ENCODE measurements at regions of chr2 and their contacts with region 1.

Region 1: GRCh38 chr2:31534636-31535035 is 46.1 kb downstream of the SRD5A2 start:
- DNase-seq: no peak
- H3K4me3 ChIP-seq: no peak overlapping the region
- CTCF ChIP-seq: no peak

Region 2: DNA sequence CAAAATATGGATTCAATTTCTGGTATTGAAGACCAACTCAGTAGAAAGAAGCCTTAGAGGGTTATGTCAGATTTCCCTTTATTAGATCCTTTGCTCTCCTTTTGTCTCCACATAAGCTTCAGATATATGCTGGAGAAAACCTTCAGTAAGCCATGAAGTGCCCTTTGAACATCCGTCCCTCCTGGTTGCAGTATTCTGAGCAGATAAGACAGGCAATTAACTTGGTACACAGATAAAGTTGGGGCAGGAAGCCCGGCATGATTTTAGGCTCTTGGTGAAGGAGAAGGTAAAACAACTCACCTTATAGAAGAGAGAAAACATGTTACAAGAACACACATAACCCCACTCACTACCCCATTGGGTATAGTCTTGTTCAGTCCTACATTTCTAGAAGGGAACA is 30.3 kb before region 1 on chr2:
- in situ Hi-C with region 1: loop called (anchors 5 kb)
- DNase-seq: no peak
- H3K4me3 ChIP-seq: no peak overlapping the region
- CTCF ChIP-seq: no peak

Region 3: DNA sequence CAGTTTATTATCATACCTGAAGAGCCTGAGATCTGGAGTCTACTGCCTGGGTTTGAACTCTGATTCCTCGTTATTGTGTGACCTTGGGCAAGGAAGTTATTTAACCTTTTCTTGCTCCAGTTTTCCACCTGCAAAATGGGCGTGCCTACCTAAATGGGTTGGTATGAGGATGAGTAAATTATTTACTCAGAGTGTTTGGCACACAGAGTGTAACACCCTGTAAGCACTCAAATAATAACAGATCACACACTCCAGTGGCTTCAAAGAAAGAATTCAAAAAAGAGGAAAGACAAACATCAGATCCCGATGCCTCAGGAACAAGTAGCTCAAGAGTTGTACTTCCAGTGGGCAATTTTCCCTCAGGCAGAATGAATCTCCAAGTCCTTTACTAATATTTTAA is 43.7 kb after region 1 on chr2:
- in situ Hi-C with region 1: loop called (anchors 5 kb)
- DNase-seq: no peak
- H3K4me3 ChIP-seq: no peak overlapping the region
- CTCF ChIP-seq: no peak

Region 4: DNA sequence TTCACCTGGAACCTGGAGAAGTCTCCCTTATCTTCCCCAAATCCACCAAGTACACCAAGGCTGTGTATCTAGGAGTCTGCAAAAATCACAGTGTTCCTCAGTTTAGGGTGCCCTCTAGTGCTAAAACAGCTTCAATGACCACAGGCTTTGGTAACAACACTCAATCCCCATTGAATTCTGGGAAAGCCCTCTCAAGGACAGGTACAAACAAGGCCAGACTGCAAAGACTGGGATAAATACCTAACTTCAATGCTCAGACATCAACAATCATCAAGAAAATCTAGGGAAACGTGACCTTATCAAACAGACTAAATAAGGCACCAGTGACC is 195.1 kb after region 1 on chr2:
- in situ Hi-C with region 1: no loop called
- DNase-seq: no peak
- H3K4me3 ChIP-seq: no peak overlapping the region
- CTCF ChIP-seq: peak; percentile 35

Measured in astrocyte of the cerebellum (primary cell).